ENCODE measurements at regions of chrX and their contacts with region 1.

Region 1: DNA sequence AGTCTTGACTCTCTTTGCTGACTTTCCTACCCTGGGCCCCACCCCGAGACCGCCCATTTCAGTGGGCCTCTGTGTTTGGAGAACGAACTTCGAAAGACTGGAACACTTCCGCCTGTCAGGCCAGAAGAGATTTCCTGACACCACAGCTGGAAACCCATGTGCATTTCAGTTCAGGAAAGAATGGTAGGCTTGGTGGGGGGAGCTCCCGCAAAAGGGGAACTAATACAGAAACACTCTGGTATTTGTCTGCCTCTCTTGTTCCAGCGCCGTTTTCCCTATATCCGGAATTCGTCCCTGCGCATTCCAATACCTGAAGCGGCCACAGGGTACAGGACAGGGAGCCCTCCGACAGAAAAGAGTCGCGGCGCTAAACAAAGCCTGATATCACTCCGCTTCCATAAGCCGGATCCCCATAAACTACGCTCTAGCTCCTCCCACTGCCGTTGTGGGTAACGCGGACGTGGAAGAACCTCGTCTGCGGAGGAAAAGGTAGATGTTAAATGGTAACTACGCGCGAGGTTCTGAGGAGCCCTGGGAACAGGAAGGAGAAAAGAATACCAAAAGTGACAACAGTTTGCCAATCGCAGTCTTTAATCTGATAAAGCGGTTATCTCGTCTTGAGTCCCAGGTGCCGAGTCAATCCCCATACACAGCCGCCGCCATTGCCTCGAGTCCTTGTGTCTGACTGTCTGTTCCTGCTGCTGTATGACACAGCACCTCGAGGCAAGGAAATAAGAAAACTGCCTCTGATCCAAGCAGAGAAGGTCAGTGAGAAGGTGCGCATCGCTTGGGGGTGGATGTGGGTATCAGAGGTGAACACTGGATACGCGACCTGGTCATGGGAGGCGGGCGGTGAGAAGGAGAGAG is at the start of gene ARMCX5:
- DNase-seq: peak; percentile 30 to 84 (median 66)
- ATAC-seq: peak; percentile 85 to 87
- H3K4me3 Mint-ChIP-seq: peak within 1 kb of the TSS; percentile 95 to 100 (median 98)
- H3K27ac Mint-ChIP-seq: peak within 1 kb of the TSS; percentile 96 to 99 (median 98)
- H3K4me1 Mint-ChIP-seq: peaks cover 18 to 39% (median 37%) of the 10 kb centered on the region in 4 donors
- H3K27me3 Mint-ChIP-seq: no peaks in the 10 kb centered on the region
- polyA plus RNA-seq, gene ARMCX5: 6.9 to 12.4 (median 7.3) TPM

Region 2: DNA sequence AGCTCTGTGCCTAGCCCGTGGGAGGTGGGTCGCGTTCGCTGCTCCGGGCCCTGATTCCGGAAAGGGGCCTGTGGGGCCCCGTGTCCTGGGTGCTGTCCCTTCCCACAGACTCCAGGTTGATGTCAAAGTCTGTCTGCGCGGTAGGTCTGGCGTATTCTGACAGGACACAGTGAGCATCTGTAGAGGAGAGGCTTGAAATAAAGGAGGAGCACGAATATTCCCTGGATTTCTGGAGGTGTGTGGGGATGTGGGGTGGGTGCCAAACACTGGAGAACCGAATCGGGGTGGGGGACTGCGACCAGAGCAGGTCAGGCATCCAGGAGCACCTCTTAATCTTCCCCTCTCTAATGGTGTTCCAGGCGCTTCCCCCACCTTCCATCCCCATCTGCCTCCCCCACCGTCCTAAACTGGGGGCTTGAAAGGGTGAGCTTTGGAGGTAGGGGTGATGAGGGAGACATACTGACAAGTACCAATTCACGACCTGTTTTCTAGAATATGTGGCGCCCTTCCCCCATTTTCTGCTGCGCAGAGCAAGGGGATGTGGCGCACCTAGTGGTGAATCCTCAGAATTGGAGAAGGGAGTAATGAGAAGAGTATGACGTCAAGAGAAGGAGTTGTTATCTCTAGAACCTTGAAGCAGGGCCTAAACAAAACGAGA is 52.8 kb after region 1 on chrX:
- POLR2A ChIA-PET with region 1: interaction called, 15 read pairs
- DNase-seq: peak; percentile 23 to 88 (median 69)
- ATAC-seq: peak; percentile 70 to 75
- H3K4me3 Mint-ChIP-seq: peak overlapping the region; percentile 88 to 99 (median 96)
- H3K27ac Mint-ChIP-seq: peak overlapping the region; percentile 91 to 99 (median 96)
- H3K4me1 Mint-ChIP-seq: peaks cover 27 to 47% (median 35%) of the 10 kb centered on the region in 4 donors
- H3K27me3 Mint-ChIP-seq: no peaks in the 10 kb centered on the region

Measured in naive thymus-derived CD8-positive, alpha-beta T cell (primary cell).